ENCODE measurements at regions of chr14 and their contacts with region 1.

Region 1: GRCh38 chr14:68795597-68796417 is 2.9 kb upstream of the ZFP36L1 start:
- DNase-seq: peak; percentile 79
- ATAC-seq: peak; percentile 31
- H3K4me3 ChIP-seq: peak overlapping the region; percentile 72
- H3K27ac ChIP-seq: peak overlapping the region; percentile 98
- H3K4me1 ChIP-seq: peaks cover 16% of the 10 kb centered on the region
- H3K27me3 ChIP-seq: no peaks in the 10 kb centered on the region
- CTCF ChIP-seq: peak; percentile 58
- POLR2A ChIP-seq: peak; percentile 87
- RAD21 ChIP-seq: peak; percentile 39

Region 2: GRCh38 chr14:68140111-68140741 is 655.6 kb before region 1 on chr14:
- CTCF ChIA-PET with region 1: no interaction called
- POLR2A ChIA-PET with region 1: interaction called, 3 read pairs
- dilution Hi-C with region 1: no loop called
- in situ Hi-C with region 1: no loop called
- intact Hi-C with region 1: loop called (anchors 10 kb)
- DNase-seq: peak; percentile 99
- ATAC-seq: peak; percentile 73
- H3K4me3 ChIP-seq: no peak overlapping the region
- H3K27ac ChIP-seq: peak overlapping the region; percentile 53; the same call in 1 of the 2 replicates
- H3K4me1 ChIP-seq: peaks cover 20% of the 10 kb centered on the region
- H3K27me3 ChIP-seq: no peaks in the 10 kb centered on the region
- CTCF ChIP-seq: no peak
- POLR2A ChIP-seq: no peak; the same call in 1 of the 2 replicates
- RAD21 ChIP-seq: peak; percentile 12; the same call in 1 of the 2 replicates

Region 3: GRCh38 chr14:68466491-68467032 is 329.2 kb before region 1 on chr14:
- CTCF ChIA-PET with region 1: no interaction called
- POLR2A ChIA-PET with region 1: no interaction called
- dilution Hi-C with region 1: no loop called
- in situ Hi-C with region 1: no loop called
- intact Hi-C with region 1: loop called (anchors 10 kb)
- DNase-seq: peak; percentile 92
- ATAC-seq: peak; percentile 89
- H3K4me3 ChIP-seq: no peak overlapping the region
- H3K27ac ChIP-seq: peak overlapping the region; percentile 76
- H3K4me1 ChIP-seq: peaks cover 8% of the 10 kb centered on the region
- H3K27me3 ChIP-seq: no peaks in the 10 kb centered on the region
- CTCF ChIP-seq: no peak
- POLR2A ChIP-seq: no peak
- RAD21 ChIP-seq: no peak

Region 4: DNA sequence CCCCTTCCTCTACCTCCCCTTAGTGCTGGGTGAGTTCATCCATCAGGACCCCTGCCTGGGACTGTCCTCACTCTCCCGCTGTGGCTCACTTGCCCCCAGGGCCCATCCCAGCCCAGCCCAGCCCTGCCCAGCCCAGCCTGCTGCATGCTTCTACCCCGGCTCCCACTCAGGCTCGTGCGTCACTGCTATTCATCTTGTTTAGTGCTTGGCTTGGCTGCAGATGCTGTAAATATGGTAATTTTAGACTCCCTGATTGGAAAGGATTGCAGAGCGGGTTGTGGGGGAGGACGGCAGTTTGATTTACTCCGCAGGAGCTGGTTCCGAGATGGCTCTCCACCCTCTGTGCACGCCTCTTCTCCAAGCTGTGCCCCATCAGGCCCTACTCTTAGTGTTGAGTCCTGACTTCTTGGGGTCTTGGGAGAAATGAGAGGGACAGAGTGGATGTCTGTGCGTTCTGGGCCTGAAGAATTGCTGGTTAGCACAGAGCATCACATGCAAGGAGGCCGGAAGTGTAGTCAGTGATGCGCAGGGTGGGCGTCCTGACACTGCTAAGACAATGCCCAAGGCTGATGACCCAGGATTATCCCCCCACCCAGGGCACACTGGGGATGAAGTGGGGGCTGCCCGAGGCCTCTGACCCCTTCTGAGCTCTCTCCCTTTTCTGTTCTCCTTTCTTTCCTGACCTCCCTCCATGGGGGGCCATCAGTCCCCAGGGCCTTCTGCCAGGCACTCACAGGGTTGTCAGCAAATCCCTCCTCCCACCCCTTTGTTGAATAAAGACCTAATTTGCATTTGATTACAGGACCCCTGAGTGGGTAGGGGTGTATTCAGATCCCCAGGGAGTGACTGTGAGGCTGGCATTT is 247.4 kb before region 1 on chr14:
- CTCF ChIA-PET with region 1: no interaction called
- POLR2A ChIA-PET with region 1: interaction called, 3 read pairs
- dilution Hi-C with region 1: no loop called
- in situ Hi-C with region 1: no loop called
- intact Hi-C with region 1: loop called (anchors 2 kb)
- DNase-seq: peak; percentile 98
- ATAC-seq: peak; percentile 79
- H3K4me3 ChIP-seq: no peak overlapping the region
- H3K27ac ChIP-seq: peak overlapping the region; percentile 95
- H3K4me1 ChIP-seq: peaks cover 45% of the 10 kb centered on the region
- H3K27me3 ChIP-seq: no peaks in the 10 kb centered on the region
- CTCF ChIP-seq: no peak
- POLR2A ChIP-seq: 0 out of 2 replicates have a peak, but pooled peaks have one; percentile 30
- RAD21 ChIP-seq: peak; percentile 31

Region 5: DNA sequence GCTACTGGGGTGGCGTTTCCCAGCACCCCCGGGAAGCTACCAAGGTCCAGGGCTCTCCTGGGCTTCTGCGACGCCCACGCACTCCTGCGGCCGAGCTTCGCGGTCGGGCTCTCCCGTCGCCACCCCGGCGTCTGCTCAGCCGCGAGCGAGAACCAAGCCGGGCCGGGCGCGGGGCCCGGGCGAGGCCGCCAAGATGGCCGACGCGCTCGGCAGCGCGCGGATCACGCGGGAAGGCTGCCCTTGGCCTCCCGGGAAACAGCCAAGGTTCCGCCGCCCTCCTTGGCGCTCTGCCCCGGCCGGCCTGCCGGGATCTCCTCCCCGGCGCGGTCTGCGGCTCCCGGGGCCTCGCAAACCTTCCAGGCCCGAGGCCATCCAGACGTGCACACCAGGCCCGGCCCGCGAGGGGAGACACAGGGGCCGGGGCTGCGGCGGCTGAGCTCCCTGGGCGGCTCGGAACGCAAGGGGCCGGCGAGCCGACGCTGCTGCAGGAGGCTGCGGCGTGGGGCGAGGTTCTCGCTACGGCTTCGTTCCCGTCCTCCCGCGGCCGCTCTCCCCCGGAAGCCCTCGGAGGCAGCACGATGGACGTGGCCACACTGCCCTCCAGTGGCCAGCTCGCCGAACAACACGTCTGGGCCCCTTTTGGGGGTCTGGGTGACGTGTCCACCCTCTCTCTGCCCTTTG is 20.6 kb after region 1 on chr14:
- CTCF ChIA-PET with region 1: interaction called, 3 read pairs
- POLR2A ChIA-PET with region 1: interaction called, 50 read pairs
- dilution Hi-C with region 1: no loop called
- in situ Hi-C with region 1: no loop called
- intact Hi-C with region 1: loop called (anchors 1 kb)
- DNase-seq: peak; percentile 86
- ATAC-seq: peak; percentile 86
- H3K4me3 ChIP-seq: peak overlapping the region; percentile 38
- H3K27ac ChIP-seq: peak overlapping the region; percentile 92
- H3K4me1 ChIP-seq: peaks cover 24% of the 10 kb centered on the region
- H3K27me3 ChIP-seq: no peaks in the 10 kb centered on the region
- CTCF ChIP-seq: peak; percentile 97
- POLR2A ChIP-seq: 0 out of 2 replicates have a peak, but pooled peaks have one; percentile 16
- RAD21 ChIP-seq: peak; percentile 98

Measured in IMR-90 (cell line).